Cardiac septum (tissue), 1 donor: ENCODE measurements at regions of chr15 and their contacts with region 1.

Region 1: GRCh38 chr15:70266412-70267121 is 168.8 kb upstream of the TLE3 start:
- DNase-seq: peak; percentile 91

Region 2: GRCh38 chr15:70111203-70112073 is 155.1 kb before region 1 on chr15:
- intact Hi-C with region 1: loop called (anchors 5 kb)
- DNase-seq: peak; percentile 88

Region 3: GRCh38 chr15:70323111-70323851 is 56.7 kb after region 1 on chr15:
- intact Hi-C with region 1: loop called (anchors 5 kb)
- DNase-seq: no peak

Region 4: GRCh38 chr15:70362886-70363285 is 96.3 kb after region 1 on chr15:
- intact Hi-C with region 1: no loop called
- DNase-seq: peak; percentile 72

Region 5: DNA sequence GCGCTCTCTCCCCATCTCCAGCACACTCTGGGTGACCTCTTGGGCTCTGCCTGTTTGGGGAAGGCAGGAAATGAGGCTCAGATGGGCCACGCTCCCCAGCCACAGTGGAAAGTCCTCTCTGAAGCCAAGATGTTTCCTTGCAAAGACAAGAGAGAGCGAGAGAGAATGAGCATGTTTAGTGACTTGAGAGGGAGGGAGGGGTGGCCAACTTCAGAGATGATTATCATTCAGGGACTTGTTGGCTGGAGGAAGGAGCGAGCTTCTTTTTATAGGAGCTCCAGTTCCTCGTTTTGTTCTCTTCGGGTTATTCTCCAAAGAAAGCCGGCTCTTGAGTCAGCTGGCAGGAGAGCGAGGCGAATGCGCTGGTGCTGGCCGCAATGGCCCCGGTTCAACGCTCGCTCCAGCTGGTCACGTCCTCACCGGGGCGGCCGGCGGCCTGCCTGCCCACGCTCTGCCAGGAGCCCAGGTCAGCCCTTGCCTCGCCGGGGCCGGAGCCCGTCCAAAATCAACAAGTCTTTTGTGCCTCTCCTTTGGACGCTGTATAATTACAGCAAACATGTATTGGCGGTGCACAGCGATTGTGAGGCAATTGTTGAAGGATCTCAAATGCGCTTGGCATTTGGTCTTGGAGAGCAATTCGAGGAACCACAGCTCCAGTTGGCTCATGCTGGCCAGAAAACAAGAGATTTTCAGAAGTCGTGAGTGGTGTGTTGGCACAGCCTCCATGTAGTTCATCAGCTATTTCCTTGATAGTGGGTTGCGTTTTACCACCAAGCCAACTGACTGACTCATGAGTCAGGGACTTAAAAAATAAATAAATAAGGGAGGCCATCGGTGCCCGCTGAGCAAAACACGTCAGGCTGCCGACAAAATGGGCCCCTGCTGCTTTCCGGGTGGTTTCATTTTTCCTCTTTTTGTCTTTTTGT is 208.2 kb after region 1 on chr15:
- intact Hi-C with region 1: loop called (anchors 5 kb)
- DNase-seq: peak; percentile 88